ENCODE measurements at regions of chr7 and their contacts with region 1.

Region 1: GRCh38 chr7:38107486-38107893 is 70.6 kb upstream of the STARD3NL start:
- DNase-seq: peak; percentile 74
- H3K4me3 Mint-ChIP-seq: no peak overlapping the region
- H3K27ac Mint-ChIP-seq: no peak overlapping the region
- H3K4me1 Mint-ChIP-seq: no peaks in the 10 kb centered on the region
- H3K27me3 Mint-ChIP-seq: peaks cover 66% of the 10 kb centered on the region
- CTCF ChIP-seq: peak; percentile 68

Region 2: GRCh38 chr7:37901236-37901827 is 206.2 kb before region 1 on chr7:
- CTCF ChIA-PET with region 1: interaction called, 45 read pairs
- POLR2A ChIA-PET with region 1: interaction called, 4 read pairs
- intact Hi-C with region 1: loop called (anchors 2 kb)
- DNase-seq: peak; percentile 53
- H3K4me3 Mint-ChIP-seq: no peak overlapping the region
- H3K27ac Mint-ChIP-seq: no peak overlapping the region
- H3K4me1 Mint-ChIP-seq: no peaks in the 10 kb centered on the region
- H3K27me3 Mint-ChIP-seq: peaks cover 35% of the 10 kb centered on the region
- CTCF ChIP-seq: peak; percentile 44

Region 3: GRCh38 chr7:37952240-37952639 is 155.2 kb before region 1 on chr7:
- CTCF ChIA-PET with region 1: no interaction called
- POLR2A ChIA-PET with region 1: no interaction called
- intact Hi-C with region 1: no loop called
- DNase-seq: no peak
- H3K4me3 Mint-ChIP-seq: no peak overlapping the region
- H3K27ac Mint-ChIP-seq: no peak overlapping the region
- H3K4me1 Mint-ChIP-seq: no peaks in the 10 kb centered on the region
- H3K27me3 Mint-ChIP-seq: peaks cover 12% of the 10 kb centered on the region
- CTCF ChIP-seq: no peak

Region 4: DNA sequence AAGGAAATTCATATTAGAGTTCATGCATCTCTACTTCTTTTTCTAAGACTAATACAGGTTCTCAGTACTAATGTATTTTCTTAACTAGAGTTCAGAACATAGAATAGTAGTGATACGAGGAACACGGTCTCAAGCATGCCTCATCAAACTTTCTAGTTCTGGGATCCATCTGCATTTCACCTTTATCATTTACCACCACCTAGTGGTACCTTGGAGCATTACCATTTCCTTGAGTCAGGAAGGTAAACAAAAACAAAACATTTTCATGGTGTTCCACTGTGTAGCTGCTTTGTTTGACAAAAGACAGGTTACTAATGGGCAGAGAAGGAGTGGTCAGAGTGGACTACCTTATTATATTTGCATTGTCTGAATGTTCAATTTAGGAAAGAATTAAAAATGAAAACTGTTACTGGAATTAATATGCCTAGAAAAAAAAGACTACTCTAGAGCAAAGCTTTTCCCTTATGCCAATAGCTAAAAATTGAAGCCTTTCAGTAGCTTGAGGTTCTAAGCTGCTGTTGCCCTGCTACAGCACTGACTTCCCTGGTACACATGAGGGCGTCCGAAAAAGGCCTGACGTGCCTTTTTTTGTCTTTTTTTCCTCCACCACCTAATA is 115.1 kb after region 1 on chr7:
- CTCF ChIA-PET with region 1: interaction called, 293 read pairs
- POLR2A ChIA-PET with region 1: no interaction called
- intact Hi-C with region 1: loop called (anchors 1 kb)
- DNase-seq: peak; percentile 71
- H3K4me3 Mint-ChIP-seq: no peak overlapping the region
- H3K27ac Mint-ChIP-seq: no peak overlapping the region
- H3K4me1 Mint-ChIP-seq: no peaks in the 10 kb centered on the region
- H3K27me3 Mint-ChIP-seq: no peaks in the 10 kb centered on the region
- CTCF ChIP-seq: peak; percentile 92

Region 5: GRCh38 chr7:38318803-38319416 is 211.4 kb after region 1 on chr7:
- CTCF ChIA-PET with region 1: interaction called, 38 read pairs
- POLR2A ChIA-PET with region 1: no interaction called
- intact Hi-C with region 1: loop called (anchors 1 kb)
- DNase-seq: peak; percentile 68
- H3K4me3 Mint-ChIP-seq: no peak overlapping the region
- H3K27ac Mint-ChIP-seq: no peak overlapping the region
- H3K4me1 Mint-ChIP-seq: peaks cover 7% of the 10 kb centered on the region
- H3K27me3 Mint-ChIP-seq: peaks cover 26% of the 10 kb centered on the region
- CTCF ChIP-seq: peak; percentile 49